ENCODE measurements at regions of chr4 and their contacts with region 1.

Region 1: GRCh38 chr4:167021545-167022155 is 212.6 kb downstream of the SPOCK3 start:
- DNase-seq: peak; percentile 17 to 54
- ATAC-seq: peak in 7 of 8 donors; percentile 52 to 70 (median 64)
- H3K4me3 ChIP-seq: no peak overlapping the region
- H3K27ac ChIP-seq: no peak overlapping the region
- H3K4me1 ChIP-seq: no peaks in the 10 kb centered on the region
- H3K27me3 ChIP-seq: no peaks in the 10 kb centered on the region
- CTCF ChIP-seq: peak; percentile 62 to 85 (median 76)

Region 2: DNA sequence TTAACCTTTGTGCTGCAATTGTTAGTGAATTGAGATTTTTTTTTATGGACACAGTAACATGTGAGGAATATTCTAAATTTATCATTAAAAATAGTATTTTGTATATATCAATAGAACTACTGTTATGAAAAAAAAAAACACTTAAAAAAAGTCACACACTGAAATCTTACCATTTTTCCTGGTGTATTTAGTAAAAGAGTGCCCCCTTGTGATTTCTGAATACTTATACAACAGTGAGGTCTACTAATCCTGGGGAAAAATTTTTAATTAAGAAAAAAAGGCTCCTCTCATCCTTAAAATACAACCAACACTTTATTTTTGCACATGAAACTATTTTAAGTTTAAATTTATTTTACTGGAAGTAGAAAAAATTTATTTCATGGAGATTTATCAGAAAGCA is 269.0 kb after region 1 on chr4:
- intact Hi-C with region 1: loop called in 9 of 10 experiments (anchors 2 to 10 kb)
- DNase-seq: no peak
- ATAC-seq: no peak
- H3K4me3 ChIP-seq: no peak overlapping the region
- H3K27ac ChIP-seq: no peak overlapping the region
- H3K4me1 ChIP-seq: no peaks in the 10 kb centered on the region
- H3K27me3 ChIP-seq: no peaks in the 10 kb centered on the region
- CTCF ChIP-seq: peak in 7 of 9 donors; percentile 23 to 52 (median 41)

Region 3: GRCh38 chr4:168076989-168077725 is 1055.5 kb after region 1 on chr4:
- intact Hi-C with region 1: loop called in 1 of 10 experiments (anchors 5 kb)
- DNase-seq: peak in 1 of 2 donors; percentile 36
- ATAC-seq: peak in 1 of 8 donors; percentile 58
- H3K4me3 ChIP-seq: no peak overlapping the region
- H3K27ac ChIP-seq: no peak overlapping the region
- H3K4me1 ChIP-seq: no peaks in the 10 kb centered on the region
- H3K27me3 ChIP-seq: no peaks in the 10 kb centered on the region
- CTCF ChIP-seq: peak; percentile 38 to 83 (median 74)

Region 4: GRCh38 chr4:168153596-168154440 is 1132.2 kb after region 1 on chr4:
- intact Hi-C with region 1: loop called in 2 of 10 experiments (anchors 5 to 10 kb)
- DNase-seq: peak; percentile 63 to 67
- ATAC-seq: peak in 6 of 8 donors; percentile 57 to 75 (median 70)
- H3K4me3 ChIP-seq: peak overlapping the region in 8 of 10 donors; percentile 1 to 40 (median 28)
- H3K27ac ChIP-seq: no peak overlapping the region
- H3K4me1 ChIP-seq: peaks cover 0 to 7% (median 0%) of the 10 kb centered on the region in 9 donors
- H3K27me3 ChIP-seq: peaks cover 0 to 3% (median 0%) of the 10 kb centered on the region in 7 donors
- CTCF ChIP-seq: peak in 8 of 9 donors; percentile 7 to 74 (median 65)